ENCODE measurements at regions of chr11 and their contacts with region 1.

Region 1: DNA sequence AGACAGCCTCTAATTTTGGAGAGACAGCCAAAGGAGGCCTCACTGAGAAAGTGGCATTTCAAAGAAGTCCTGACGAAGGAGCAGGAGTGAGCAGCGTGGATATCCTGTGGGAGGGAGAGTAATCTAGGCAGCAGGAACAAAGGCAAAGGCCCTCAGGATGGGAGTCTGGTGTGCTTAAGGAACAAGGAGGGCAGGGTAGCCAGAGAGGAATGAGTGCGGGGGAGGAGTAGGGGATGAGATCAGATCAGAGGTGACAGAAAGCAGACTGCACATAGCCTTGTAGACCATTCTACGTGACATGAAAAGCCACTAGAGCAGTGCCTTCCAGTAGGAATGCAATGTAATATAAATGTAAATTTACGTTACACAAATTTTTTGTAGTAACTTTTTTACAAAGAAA is 5.6 kb downstream of the SLC36A4 start:
- DNase-seq: no peak
- H3K4me3 ChIP-seq: no peak overlapping the region
- H3K27ac ChIP-seq: no peak overlapping the region
- H3K4me1 ChIP-seq: peaks cover 7% of the 10 kb centered on the region
- H3K27me3 ChIP-seq: no peaks in the 10 kb centered on the region
- CTCF ChIP-seq: no peak

Region 2: GRCh38 chr11:93166862-93167261 is 25.3 kb before region 1 on chr11:
- intact Hi-C with region 1: loop called (anchors 2 kb)
- DNase-seq: no peak
- H3K4me3 ChIP-seq: no peak overlapping the region
- H3K27ac ChIP-seq: no peak overlapping the region
- H3K4me1 ChIP-seq: no peaks in the 10 kb centered on the region
- H3K27me3 ChIP-seq: no peaks in the 10 kb centered on the region
- CTCF ChIP-seq: no peak

Region 3: DNA sequence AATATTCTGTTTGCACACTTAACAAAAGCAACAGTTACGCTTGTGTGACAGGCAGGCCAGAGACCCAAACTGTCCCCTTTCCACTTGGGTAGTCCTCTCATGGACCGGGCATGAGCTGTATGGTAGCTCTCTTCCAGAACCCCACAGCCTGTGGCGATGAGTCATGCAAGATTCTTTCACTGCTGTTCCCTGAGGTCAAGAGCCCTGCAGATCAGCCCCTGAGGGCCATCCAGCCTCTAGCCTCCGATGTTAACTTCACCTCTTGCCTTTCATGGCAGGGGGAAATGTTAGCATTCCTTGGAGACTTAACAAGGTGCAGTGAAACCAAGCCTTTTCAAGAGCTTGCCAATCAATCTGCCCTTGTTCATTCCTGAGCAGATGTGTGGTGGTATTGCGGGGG is 75.2 kb after region 1 on chr11:
- intact Hi-C with region 1: no loop called
- DNase-seq: no peak
- H3K4me3 ChIP-seq: no peak overlapping the region
- H3K27ac ChIP-seq: no peak overlapping the region
- H3K4me1 ChIP-seq: no peaks in the 10 kb centered on the region
- H3K27me3 ChIP-seq: no peaks in the 10 kb centered on the region
- CTCF ChIP-seq: no peak

Measured in left ventricle myocardium inferior (tissue), 1 donor.